ENCODE measurements at regions of chr17 and their contacts with region 1.

Region 1: GRCh38 chr17:38752119-38752929 is at the start of gene PSMB3:
- DNase-seq: peak; percentile 97
- H3K4me3 Mint-ChIP-seq: peak within 1 kb of the TSS; percentile 97
- H3K27ac Mint-ChIP-seq: peak within 1 kb of the TSS; percentile 98
- H3K4me1 Mint-ChIP-seq: peaks cover 35% of the 10 kb centered on the region
- H3K27me3 Mint-ChIP-seq: peaks cover 14% of the 10 kb centered on the region
- total RNA-seq, gene PSMB3: 349 and 366 TPM in 2 replicates

Region 2: DNA sequence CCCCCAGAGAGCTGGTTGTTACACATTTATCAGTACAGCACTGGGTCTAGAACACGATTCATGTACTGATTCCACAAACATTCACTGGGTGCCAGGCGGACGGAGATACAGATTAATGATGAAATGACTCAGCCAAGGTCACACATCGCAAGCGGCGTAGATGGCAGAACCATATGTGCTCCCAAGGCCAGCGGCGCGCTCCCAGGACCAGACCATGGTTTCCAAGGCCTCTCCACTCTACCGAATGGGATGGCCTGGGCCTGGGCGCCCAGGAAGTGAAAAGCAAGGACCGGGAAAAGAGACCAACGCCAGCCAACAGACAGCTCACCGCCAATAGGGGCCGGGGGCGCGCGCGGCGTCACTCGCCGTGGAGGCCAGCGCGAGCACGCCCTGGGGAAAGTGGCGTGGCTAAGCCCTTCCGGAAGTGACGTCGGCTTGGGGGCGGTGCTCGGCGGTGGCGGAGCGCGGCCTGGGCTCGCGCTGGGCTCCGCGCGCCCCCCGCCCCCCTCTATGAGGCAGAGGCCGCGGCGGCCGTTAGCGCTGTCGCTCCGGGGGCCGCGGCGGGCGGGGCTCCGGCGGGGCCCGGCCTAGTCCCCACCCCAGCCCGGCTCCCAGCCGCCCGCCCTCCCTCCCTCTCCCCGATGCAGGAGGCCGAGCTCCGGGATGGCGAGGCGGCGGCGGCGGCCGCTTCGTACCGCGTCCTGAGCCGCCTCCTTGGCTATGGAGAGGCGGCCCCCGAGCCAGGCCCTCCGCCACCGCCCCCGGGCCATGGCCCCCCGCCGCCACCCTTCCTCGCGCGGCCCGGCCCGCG is 400.7 kb before region 1 on chr17 and contains the start of gene SOCS7:
- intact Hi-C with region 1: loop called (anchors 1 kb)
- DNase-seq: peak; percentile 88
- H3K4me3 Mint-ChIP-seq: peak within 1 kb of the TSS; percentile 93
- H3K27ac Mint-ChIP-seq: peak within 1 kb of the TSS; percentile 95
- H3K4me1 Mint-ChIP-seq: peaks cover 36% of the 10 kb centered on the region
- H3K27me3 Mint-ChIP-seq: peaks cover 6% of the 10 kb centered on the region
- total RNA-seq, gene SOCS7: 30.4 and 32.3 TPM in 2 replicates

Region 3: DNA sequence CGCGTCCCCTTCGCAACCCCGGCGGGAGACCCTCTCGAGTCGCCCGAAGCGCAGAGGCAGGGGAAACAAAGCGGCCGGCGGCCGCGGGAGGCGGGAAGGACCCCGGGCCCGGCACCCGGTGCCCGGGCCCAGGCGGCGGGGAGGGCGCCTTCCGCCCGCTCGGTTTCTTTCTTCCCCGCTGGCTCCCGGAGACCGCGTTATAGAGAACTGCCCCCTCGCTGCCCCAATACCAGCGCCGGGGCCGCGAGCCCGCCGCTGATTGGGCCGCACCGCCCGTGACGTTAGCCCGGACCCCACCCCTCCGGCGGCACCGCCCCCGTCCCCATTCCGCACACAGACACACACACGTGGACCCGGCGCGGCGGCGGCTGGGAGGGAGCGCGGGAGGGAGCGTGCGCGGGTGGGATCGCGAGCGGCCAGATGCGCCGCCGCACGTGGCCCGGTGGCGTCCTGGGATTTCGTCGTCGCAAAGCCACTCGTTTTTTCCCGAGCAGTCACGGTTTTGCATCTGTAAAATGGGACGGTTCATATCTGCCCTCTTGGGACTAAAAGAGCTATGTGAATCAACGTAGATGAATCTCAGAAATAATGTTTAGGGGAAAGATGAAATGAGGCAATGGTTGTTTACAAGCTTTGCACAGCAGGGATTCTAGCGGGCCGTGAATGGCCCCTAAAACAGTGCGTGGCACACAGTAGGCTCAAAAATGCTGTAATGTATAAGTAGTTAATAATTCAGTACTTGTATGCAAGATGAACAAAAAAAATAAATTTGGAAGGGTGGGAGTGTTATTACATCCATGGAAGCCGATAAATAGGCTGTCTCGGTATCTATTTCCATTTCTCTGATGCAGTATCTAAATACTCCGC is 77.3 kb before region 1 on chr17 and contains the start of gene EPOP:
- intact Hi-C with region 1: loop called (anchors 1 kb)
- DNase-seq: peak; percentile 90
- H3K4me3 Mint-ChIP-seq: peak within 1 kb of the TSS; percentile 71
- H3K27ac Mint-ChIP-seq: peak within 1 kb of the TSS; percentile 86
- H3K4me1 Mint-ChIP-seq: peaks cover 45% of the 10 kb centered on the region
- H3K27me3 Mint-ChIP-seq: peaks cover 22% of the 10 kb centered on the region
- total RNA-seq, gene EPOP: 56.5 and 58.8 TPM in 2 replicates

Region 4: DNA sequence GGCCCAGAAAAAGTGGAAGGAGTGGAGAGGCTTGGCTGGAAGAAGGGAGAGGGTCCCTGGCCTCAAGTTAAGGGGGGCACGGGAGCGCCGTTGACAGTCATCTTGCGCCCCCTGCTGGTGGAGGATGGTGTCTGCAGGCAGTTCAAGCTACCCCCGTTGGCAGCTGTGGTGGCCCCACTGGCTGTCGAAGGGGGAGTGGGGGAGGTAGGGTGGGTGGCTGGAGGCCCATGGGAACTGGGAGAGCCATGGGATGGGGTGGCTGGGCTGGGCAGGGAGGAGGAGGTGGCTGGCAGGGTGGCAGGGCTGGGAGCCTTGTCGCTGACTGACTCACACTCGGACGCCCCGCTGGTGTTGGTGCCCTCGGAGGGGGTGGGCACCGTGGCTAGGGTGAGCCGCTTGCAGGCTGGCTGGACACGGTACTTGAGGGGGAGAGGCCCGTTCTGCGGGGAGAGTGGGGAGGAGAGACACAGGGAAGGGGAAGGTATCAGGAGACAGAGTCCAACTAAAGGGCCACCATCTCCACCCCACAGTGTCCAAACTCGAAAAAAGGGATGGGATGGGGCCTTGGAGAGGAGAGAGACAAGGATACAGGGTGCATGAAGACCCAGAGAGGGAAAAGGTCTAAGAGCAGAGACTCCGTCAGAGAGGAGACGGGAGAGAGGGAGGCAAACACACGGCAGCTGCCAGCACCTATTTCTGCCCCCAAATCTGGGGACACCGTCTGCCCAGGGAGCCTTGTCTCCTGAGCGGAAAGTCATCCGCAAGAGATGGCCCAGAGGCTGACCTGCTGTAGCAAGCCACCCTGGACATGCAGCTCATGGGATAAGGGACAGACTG is 16.9 kb before region 1 on chr17:
- intact Hi-C with region 1: loop called (anchors 1 kb)
- DNase-seq: peak; percentile 59
- H3K4me3 Mint-ChIP-seq: no peak overlapping the region
- H3K27ac Mint-ChIP-seq: peak overlapping the region; percentile 61
- H3K4me1 Mint-ChIP-seq: peaks cover 49% of the 10 kb centered on the region
- H3K27me3 Mint-ChIP-seq: peaks cover 2% of the 10 kb centered on the region

Region 5: GRCh38 chr17:38868817-38869525 is 116.6 kb after region 1 on chr17:
- intact Hi-C with region 1: loop called (anchors 1 kb)
- DNase-seq: peak; percentile 78
- H3K4me3 Mint-ChIP-seq: peak overlapping the region; percentile 91
- H3K27ac Mint-ChIP-seq: peak overlapping the region; percentile 96
- H3K4me1 Mint-ChIP-seq: peaks cover 52% of the 10 kb centered on the region
- H3K27me3 Mint-ChIP-seq: no peaks in the 10 kb centered on the region

Region 6: DNA sequence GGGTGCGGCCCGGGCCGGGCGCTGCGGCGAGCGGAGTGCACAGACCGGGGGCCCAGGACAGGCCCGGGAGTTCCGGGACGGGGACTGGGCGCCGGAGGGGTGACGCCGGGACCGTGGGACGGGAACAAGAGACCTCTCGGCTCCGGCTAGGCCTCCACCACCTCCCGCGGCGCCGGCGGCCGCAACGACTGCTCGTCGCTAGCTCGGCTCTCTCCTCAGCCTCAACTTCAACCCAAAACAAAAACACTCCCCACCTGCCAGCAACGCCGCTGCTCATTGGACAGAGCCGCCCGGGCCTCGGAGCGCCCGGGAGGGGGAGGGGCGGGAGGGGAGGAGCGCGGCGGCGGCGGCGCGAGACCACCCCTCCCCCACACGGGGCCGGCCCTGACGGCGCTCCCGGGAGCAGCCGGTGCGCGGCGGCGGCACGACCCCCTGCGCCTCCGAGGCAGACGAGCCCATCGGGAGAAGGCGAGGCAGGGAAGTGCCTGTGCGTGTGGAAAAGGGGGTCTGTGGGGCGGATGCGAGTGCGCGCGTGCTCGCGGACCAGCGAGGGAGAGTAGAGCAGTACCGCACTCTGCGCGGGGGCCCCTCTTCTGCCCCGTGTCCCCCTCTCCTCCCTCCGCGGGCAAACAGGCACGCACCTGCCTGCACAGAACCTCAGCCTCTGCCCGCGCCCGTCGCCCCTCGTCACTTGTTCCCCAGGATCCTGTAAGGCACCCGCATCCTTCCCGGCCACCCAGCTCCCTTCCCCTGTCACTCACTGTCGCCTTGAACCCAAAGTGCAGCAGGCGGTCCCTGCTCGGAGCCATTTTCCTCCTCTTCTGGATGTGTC is 649.3 kb after region 1 on chr17 and contains the start of gene FBXL20:
- intact Hi-C with region 1: loop called (anchors 5 kb)
- DNase-seq: peak; percentile 84
- H3K4me3 Mint-ChIP-seq: peak within 1 kb of the TSS; percentile 94
- H3K27ac Mint-ChIP-seq: peak within 1 kb of the TSS; percentile 98
- H3K4me1 Mint-ChIP-seq: peaks cover 40% of the 10 kb centered on the region
- H3K27me3 Mint-ChIP-seq: no peaks in the 10 kb centered on the region
- total RNA-seq, gene FBXL20: 20.1 and 25.6 TPM in 2 replicates